B cell (primary cell): ENCODE measurements at regions of chr18 and their contacts with region 1.

Region 1: GRCh38 chr18:35085450-35086380 is 44.5 kb downstream of the MAPRE2 start:
- DNase-seq: no peak
- ATAC-seq: no peak
- H3K4me3 ChIP-seq: no peak overlapping the region
- H3K4me3 Mint-ChIP-seq: no peak overlapping the region
- H3K27ac ChIP-seq: no peak overlapping the region
- H3K27ac Mint-ChIP-seq: no peak overlapping the region
- H3K4me1 ChIP-seq: no peaks in the 10 kb centered on the region
- H3K4me1 Mint-ChIP-seq: peaks cover 20% of the 10 kb centered on the region
- H3K27me3 ChIP-seq: no peaks in the 10 kb centered on the region
- H3K27me3 Mint-ChIP-seq: no peaks in the 10 kb centered on the region
- CTCF ChIP-seq: no peak

Region 2: DNA sequence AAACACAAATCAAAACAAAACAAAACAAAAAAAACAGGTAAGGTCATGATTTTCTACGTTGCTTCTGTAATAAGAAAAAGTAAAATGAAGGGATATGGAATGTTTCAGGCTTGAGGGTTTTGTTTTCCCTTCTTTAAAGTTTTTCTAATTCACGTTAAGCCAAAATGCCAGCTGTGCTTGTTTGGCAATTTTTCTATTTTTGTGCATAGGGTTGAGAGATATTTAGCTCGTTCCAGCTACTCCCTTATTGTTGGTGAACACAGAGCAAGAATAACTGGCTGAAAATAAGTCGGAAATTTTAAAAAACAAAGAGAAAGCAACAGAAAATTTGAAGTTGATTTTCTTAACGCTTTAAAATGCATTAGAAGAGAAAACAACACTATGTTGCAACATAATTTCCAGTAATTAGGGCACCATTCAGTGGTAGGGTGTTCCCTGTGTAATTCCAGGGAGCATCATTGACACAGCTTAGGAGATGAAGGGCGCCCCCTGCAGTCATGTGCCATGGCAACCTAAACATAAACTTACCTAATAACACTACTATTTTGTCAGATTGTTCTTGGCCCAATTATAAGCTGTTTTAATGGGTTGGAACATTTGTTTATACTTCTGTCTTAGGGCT is 276.2 kb before region 1 on chr18:
- CTCF ChIA-PET with region 1: no interaction called
- POLR2A ChIA-PET with region 1: no interaction called
- intact Hi-C with region 1: no loop called
- DNase-seq: no peak
- ATAC-seq: no peak
- H3K4me3 ChIP-seq: no peak overlapping the region
- H3K4me3 Mint-ChIP-seq: no peak overlapping the region
- H3K27ac ChIP-seq: no peak overlapping the region
- H3K27ac Mint-ChIP-seq: no peak overlapping the region
- H3K4me1 ChIP-seq: no peaks in the 10 kb centered on the region
- H3K4me1 Mint-ChIP-seq: no peaks in the 10 kb centered on the region
- H3K27me3 ChIP-seq: no peaks in the 10 kb centered on the region
- H3K27me3 Mint-ChIP-seq: peaks cover 7% of the 10 kb centered on the region
- CTCF ChIP-seq: no peak

Region 3: GRCh38 chr18:35050028-35050546 is 35.6 kb before region 1 on chr18:
- CTCF ChIA-PET with region 1: interaction called, 5 read pairs
- POLR2A ChIA-PET with region 1: no interaction called
- intact Hi-C with region 1: loop called (anchors 5 kb)
- DNase-seq: no peak
- ATAC-seq: peak; percentile 31
- H3K4me3 ChIP-seq: peak overlapping the region in 3 of 5 experiments; percentile 21 to 57 (median 27)
- H3K4me3 Mint-ChIP-seq: peak overlapping the region; percentile 83
- H3K27ac ChIP-seq: peak overlapping the region; percentile 85 to 87
- H3K27ac Mint-ChIP-seq: peak overlapping the region; percentile 88
- H3K4me1 ChIP-seq: peaks cover 50 to 55% of the 10 kb centered on the region in 2 donors
- H3K4me1 Mint-ChIP-seq: peaks cover 79% of the 10 kb centered on the region
- H3K27me3 ChIP-seq: no peaks in the 10 kb centered on the region
- H3K27me3 Mint-ChIP-seq: no peaks in the 10 kb centered on the region
- CTCF ChIP-seq: no peak